Caco-2 (cell line): ENCODE measurements at regions of chr13 and their contacts with region 1.

Region 1: GRCh38 chr13:58960888-58961287 is 1202.8 kb downstream of the DIAPH3 start:
- DNase-seq: no peak
- H3K4me3 ChIP-seq: no peak overlapping the region
- H3K4me3 Mint-ChIP-seq: no peak overlapping the region
- H3K27ac Mint-ChIP-seq: no peak overlapping the region
- H3K4me1 ChIP-seq: no peaks in the 10 kb centered on the region
- H3K4me1 Mint-ChIP-seq: no peaks in the 10 kb centered on the region
- H3K27me3 ChIP-seq: no peaks in the 10 kb centered on the region
- H3K27me3 Mint-ChIP-seq: no peaks in the 10 kb centered on the region
- CTCF ChIP-seq: peak in 1 of 2 experiments; percentile 33

Region 2: DNA sequence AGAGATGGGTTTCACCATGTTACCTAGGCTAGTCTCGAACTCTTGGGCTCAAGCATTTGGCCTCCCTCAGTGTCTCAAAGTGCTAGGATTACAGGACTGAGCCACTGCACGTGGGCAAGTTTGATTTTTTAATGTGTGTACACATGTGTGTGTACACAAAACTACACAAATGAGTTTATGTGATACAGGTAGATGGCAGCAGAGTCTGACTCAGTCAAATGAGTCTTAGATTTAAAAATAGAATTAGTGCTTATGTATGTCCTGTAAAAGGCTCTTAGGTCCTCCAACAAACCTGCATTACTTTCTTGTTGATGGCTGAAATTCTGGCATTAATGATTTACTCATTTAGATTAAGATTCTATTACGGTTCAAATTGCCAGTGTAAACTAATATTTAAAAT is 1035.6 kb before region 1 on chr13:
- CTCF ChIA-PET with region 1: no interaction called
- POLR2A ChIA-PET with region 1: no interaction called
- intact Hi-C with region 1: loop called (anchors 5 kb)
- DNase-seq: peak in 1 of 2 experiments; percentile 3
- H3K4me3 ChIP-seq: no peak overlapping the region
- H3K4me3 Mint-ChIP-seq: no peak overlapping the region
- H3K27ac Mint-ChIP-seq: no peak overlapping the region
- H3K4me1 ChIP-seq: no peaks in the 10 kb centered on the region
- H3K4me1 Mint-ChIP-seq: no peaks in the 10 kb centered on the region
- H3K27me3 ChIP-seq: no peaks in the 10 kb centered on the region
- H3K27me3 Mint-ChIP-seq: no peaks in the 10 kb centered on the region
- CTCF ChIP-seq: peak in 1 of 2 experiments; percentile 4

Region 3: DNA sequence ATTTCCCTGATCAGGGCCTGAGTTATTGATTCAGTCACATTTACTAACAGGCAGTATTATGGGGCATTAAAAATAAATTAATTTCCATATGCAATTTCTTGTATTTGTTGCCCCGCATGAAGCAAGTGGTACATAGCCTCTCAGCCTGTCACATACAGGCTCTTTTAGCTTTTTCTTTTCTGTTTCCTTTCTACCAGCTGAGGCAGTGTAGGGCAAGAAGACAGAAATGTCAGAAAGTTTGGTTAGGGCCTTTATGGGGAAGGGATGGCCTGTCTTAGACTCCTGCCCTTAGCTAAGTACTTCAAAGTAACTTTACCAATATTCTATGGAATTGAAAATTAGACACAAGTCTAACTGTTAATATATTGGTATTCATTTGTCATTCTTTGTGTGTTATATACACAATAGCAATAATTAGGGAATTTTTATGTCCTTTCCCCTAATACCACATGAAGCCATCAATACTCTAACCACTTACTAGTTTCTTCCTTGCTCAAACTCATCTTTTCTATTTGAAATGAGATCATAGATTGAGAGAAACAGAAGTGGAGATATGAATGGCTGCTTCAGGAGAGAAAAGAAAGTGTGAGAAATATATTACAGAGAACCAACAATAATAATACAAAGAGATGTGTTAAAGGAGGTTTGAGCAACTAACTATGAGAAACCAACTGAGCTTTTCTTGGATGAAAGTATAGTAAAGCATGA is 659.8 kb before region 1 on chr13:
- CTCF ChIA-PET with region 1: no interaction called
- POLR2A ChIA-PET with region 1: no interaction called
- intact Hi-C with region 1: loop called (anchors 10 kb)
- DNase-seq: no peak
- H3K4me3 ChIP-seq: no peak overlapping the region
- H3K4me3 Mint-ChIP-seq: no peak overlapping the region
- H3K27ac Mint-ChIP-seq: no peak overlapping the region
- H3K4me1 ChIP-seq: no peaks in the 10 kb centered on the region
- H3K4me1 Mint-ChIP-seq: peaks cover 7% of the 10 kb centered on the region
- H3K27me3 ChIP-seq: no peaks in the 10 kb centered on the region
- H3K27me3 Mint-ChIP-seq: no peaks in the 10 kb centered on the region
- CTCF ChIP-seq: no peak

Region 4: GRCh38 chr13:58823701-58824100 is 137.2 kb before region 1 on chr13:
- CTCF ChIA-PET with region 1: no interaction called
- POLR2A ChIA-PET with region 1: no interaction called
- intact Hi-C with region 1: no loop called
- DNase-seq: no peak
- H3K4me3 ChIP-seq: no peak overlapping the region
- H3K4me3 Mint-ChIP-seq: no peak overlapping the region
- H3K27ac Mint-ChIP-seq: no peak overlapping the region
- H3K4me1 ChIP-seq: no peaks in the 10 kb centered on the region
- H3K4me1 Mint-ChIP-seq: no peaks in the 10 kb centered on the region
- H3K27me3 ChIP-seq: no peaks in the 10 kb centered on the region
- H3K27me3 Mint-ChIP-seq: peaks cover 2% of the 10 kb centered on the region
- CTCF ChIP-seq: no peak

Region 5: GRCh38 chr13:59024434-59024833 is 63.5 kb after region 1 on chr13:
- CTCF ChIA-PET with region 1: no interaction called
- POLR2A ChIA-PET with region 1: no interaction called
- intact Hi-C with region 1: loop called (anchors 2 kb)
- DNase-seq: no peak
- H3K4me3 ChIP-seq: no peak overlapping the region
- H3K4me3 Mint-ChIP-seq: no peak overlapping the region
- H3K27ac Mint-ChIP-seq: no peak overlapping the region
- H3K4me1 ChIP-seq: no peaks in the 10 kb centered on the region
- H3K4me1 Mint-ChIP-seq: no peaks in the 10 kb centered on the region
- H3K27me3 ChIP-seq: no peaks in the 10 kb centered on the region
- H3K27me3 Mint-ChIP-seq: peaks cover 5% of the 10 kb centered on the region
- CTCF ChIP-seq: no peak